Activated CD8-positive, alpha-beta T cell treated with anti-CD3 and anti-CD28 coated beads for 36 hours (primary cell): ENCODE measurements at regions of chr7 and their contacts with region 1.

Region 1: GRCh38 chr7:150988230-150989226 is 2.3 kb upstream of the NOS3 start:
- DNase-seq: peak; percentile 79
- ATAC-seq: peak; percentile 76
- H3K4me3 Mint-ChIP-seq: no peak overlapping the region
- H3K27ac Mint-ChIP-seq: no peak overlapping the region
- H3K4me1 Mint-ChIP-seq: peaks cover 15% of the 10 kb centered on the region
- H3K27me3 Mint-ChIP-seq: peaks cover 16% of the 10 kb centered on the region
- CTCF ChIP-seq: peak; percentile 91

Region 2: DNA sequence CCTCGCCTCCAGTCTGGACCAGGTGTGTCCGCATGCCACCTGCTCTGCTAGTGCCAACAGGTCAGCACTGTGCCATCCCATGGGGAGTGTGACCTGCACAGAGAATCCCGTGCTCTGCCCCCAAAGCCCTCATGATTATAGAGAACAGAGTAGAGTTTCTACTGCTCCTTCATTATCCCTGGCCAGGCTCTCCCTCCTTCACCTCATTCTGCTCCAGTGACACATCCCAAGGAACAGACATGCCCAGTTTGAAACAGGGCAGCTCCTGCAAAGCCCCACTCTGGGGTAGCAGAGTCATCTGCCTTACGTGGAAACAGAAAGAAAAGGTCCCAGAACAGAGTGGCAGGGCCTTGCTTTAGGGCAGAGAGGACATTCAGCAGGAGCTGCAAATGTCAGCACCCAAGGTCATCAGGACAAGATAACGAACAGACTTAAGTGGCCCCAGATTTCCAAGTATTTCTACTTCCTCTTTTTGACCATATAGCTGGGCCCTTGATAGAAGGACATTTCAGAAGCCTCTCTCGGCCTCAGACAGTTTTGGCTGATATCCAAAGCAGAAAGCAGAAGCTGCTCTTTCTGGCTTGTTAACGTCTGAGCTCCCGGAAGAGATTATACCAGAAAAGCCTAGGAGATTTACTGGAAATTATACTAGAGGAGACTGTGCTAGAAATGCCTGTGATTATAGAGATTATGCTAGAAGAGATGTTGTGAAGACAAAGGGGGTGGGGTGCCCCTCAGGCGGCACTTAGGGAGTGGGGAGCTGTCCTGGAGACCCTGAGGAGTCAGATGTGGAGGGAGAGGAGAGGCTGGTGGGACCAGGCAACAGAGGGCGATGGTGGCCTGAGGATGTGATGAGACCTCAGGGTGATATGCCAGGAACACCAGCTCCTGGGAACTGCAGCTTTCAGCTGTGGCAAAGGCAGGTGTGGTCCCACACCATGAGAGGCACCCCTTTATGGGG is 200.9 kb before region 1 on chr7:
- CTCF ChIA-PET with region 1: no interaction called
- POLR2A ChIA-PET with region 1: no interaction called
- intact Hi-C with region 1: loop called (anchors 10 kb)
- DNase-seq: no peak
- ATAC-seq: no peak
- H3K4me3 Mint-ChIP-seq: no peak overlapping the region
- H3K27ac Mint-ChIP-seq: no peak overlapping the region
- H3K4me1 Mint-ChIP-seq: no peaks in the 10 kb centered on the region
- H3K27me3 Mint-ChIP-seq: peaks cover 7% of the 10 kb centered on the region
- CTCF ChIP-seq: no peak

Region 3: DNA sequence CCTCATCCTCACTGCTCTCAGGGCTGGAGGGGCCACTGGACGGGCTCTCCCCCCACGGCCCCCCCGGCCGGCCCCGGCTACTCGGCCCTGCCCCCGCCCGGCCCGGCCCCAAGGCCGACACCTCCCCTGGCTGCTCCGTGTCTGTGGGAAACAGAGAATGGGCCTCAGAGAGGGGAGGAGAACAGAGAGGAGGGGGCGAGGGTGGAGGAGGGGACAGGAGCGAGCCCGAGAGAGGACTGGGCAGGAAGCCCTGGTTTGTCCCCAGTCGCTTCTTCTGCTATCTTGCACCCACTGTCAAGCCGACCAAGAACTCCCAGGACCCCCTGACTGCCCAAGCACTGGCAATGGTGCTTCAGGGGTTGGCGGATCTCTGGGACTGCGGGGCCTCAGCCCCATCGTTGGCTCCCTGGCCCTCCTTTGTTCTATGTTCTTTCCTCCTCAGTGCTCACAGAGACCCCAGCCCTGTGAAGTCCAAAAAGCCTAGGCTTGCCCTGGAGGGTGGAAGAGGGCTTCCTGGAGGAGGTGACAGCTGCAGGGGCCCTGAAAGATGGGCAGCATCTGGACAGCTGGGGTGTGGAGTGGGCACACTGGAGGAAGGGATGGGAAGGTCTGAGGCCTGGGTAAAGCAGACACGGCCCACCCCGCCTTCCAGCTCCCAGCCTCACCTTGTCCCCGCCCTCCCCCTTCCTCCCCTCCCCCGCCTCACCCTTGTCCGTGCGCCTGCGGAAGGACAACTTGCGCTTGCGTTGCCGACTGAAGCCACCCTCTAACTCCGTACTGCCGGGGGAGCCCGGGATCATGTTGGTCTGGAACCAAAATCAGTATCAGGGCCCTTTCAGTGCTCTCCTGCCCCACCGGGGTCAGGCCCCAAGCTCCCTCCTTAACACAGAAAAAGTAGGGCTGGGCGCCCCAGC is 40.5 kb before region 1 on chr7:
- CTCF ChIA-PET with region 1: no interaction called
- POLR2A ChIA-PET with region 1: no interaction called
- intact Hi-C with region 1: no loop called
- DNase-seq: no peak
- ATAC-seq: no peak
- H3K4me3 Mint-ChIP-seq: no peak overlapping the region
- H3K27ac Mint-ChIP-seq: no peak overlapping the region
- H3K4me1 Mint-ChIP-seq: peaks cover 2% of the 10 kb centered on the region
- H3K27me3 Mint-ChIP-seq: peaks cover 7% of the 10 kb centered on the region
- CTCF ChIP-seq: no peak

Region 4: DNA sequence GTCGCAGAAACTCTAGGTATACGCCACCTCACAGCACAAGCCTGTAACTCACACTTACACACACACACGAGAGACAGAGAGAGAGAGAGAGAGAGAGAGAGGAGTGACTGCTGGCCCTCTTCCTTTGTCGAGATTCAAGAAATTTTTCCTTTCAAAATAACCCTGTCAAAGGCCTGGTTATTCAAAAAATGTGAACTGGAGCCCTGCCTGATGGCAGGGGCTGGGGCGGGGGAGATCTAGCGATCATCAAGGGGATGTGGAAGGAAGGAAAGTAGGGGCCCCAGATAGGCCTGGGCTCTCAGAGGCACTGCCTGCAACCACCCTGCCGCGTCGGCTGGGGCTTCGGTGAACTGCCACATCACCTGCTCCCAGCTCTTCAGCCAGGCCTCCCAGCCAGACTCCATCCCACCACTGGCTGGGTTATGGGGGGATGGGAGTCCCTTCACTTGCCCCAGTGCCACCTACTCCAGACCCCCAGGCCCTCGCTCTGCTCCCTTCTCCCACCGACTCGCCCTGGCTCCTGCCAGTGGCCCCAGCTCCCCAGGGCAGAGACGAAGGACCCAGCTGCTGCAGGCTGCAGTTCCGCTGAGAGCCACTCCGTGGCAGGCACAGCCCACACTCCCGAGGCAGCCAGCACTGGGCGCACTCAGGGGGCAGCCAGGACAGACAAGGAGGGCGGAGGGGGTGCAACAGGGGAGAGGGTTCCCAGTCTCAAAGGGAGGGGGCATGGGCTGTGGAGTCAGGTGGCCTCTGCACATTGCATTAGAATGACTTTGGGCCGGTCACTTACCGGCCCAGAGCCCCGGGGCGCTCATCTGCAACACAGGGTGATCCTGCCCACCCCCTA is 25.8 kb before region 1 on chr7:
- CTCF ChIA-PET with region 1: interaction called, 96 read pairs
- POLR2A ChIA-PET with region 1: no interaction called
- intact Hi-C with region 1: no loop called
- DNase-seq: peak; percentile 69
- ATAC-seq: peak; percentile 98
- H3K4me3 Mint-ChIP-seq: no peak overlapping the region
- H3K27ac Mint-ChIP-seq: no peak overlapping the region
- H3K4me1 Mint-ChIP-seq: peaks cover 2% of the 10 kb centered on the region
- H3K27me3 Mint-ChIP-seq: peaks cover 16% of the 10 kb centered on the region
- CTCF ChIP-seq: peak; percentile 90

Region 5: DNA sequence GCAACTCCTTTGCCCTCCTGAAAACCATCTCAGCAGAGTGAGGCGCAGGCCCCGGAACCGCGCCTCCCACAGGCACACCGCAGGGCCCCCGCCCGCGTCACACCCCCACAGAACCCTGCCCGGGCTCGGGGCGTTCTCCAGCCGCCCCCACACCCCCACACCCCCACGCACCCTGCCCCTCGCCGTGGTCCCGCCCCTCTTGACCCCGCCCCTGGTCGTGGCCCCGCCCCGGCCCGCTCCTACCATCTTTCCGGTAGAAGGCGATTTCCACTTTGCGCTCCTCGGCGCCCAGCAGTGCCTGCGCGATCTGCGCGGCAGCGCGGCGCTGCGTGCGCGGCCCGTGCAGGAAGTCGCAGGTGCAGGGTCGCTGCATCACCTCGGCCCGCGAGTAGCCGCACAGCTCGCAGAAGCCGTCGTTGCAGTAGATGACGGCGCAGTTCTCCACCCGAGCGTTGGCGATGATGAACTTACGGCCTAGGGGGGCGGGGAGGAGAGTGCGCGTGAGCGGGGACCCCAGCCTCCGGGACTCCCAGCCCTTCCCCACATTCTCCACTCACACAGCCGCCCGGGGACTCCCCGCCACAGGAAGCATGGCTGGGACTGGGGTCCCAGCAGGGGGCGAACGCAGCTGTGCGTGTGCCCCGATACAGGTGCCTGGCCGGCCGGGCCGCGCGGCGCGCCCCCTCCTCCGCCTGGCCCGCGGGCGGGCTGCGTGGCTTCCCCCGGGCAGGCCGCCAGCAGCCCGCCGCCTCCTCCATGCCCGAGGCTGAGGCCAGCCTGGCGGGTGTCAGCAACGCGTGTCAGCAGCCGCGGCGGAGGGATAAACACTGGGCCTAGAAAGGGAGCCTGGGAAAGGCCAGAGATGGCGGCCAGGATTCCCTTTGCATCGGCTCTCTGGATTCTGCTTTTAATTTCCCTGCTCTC is 13.8 kb before region 1 on chr7:
- CTCF ChIA-PET with region 1: interaction called, 34 read pairs
- POLR2A ChIA-PET with region 1: interaction called, 3 read pairs
- intact Hi-C with region 1: no loop called
- DNase-seq: peak; percentile 75
- ATAC-seq: peak; percentile 76
- H3K4me3 Mint-ChIP-seq: peak overlapping the region; percentile 77
- H3K27ac Mint-ChIP-seq: peak overlapping the region; percentile 42
- H3K4me1 Mint-ChIP-seq: peaks cover 28% of the 10 kb centered on the region
- H3K27me3 Mint-ChIP-seq: peaks cover 25% of the 10 kb centered on the region
- CTCF ChIP-seq: peak; percentile 46

Region 6: DNA sequence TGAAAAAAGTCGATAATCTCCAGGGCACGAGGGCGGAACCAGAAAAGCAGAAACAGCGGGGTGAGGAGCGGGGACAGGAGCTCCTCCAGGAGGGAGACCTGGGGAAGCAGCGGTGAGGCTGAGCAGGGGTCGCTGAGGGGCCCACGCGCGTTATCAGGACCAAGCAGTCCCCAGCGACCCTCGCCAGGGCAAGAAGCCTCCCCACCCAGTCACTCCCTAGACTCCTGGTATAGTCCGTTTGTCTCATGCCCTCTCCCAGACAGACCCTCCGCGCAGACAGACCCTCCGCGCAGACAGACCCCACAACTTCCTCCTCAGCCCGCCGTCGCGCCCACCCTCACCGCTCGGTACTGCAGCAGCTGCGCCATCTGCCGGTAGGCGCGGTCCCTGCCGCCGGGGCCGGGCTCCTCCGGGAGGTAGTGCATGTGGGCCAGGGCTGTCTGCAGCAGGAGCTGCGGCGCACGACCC is 29.5 kb after region 1 on chr7:
- CTCF ChIA-PET with region 1: interaction called, 22 read pairs
- POLR2A ChIA-PET with region 1: no interaction called
- intact Hi-C with region 1: no loop called
- DNase-seq: peak; percentile 89
- ATAC-seq: peak; percentile 71
- H3K4me3 Mint-ChIP-seq: peak overlapping the region; percentile 79
- H3K27ac Mint-ChIP-seq: peak overlapping the region; percentile 75
- H3K4me1 Mint-ChIP-seq: peaks cover 52% of the 10 kb centered on the region
- H3K27me3 Mint-ChIP-seq: peaks cover 10% of the 10 kb centered on the region
- CTCF ChIP-seq: peak; percentile 99